ENCODE measurements at regions of chr2 and their contacts with region 1.

Region 1: GRCh38 chr2:148796735-148797512 is 78.1 kb upstream of the KIF5C start:
- DNase-seq: no peak
- H3K4me3 ChIP-seq: no peak overlapping the region
- H3K27ac ChIP-seq: no peak overlapping the region
- H3K4me1 ChIP-seq: no peaks in the 10 kb centered on the region
- H3K27me3 ChIP-seq: no peaks in the 10 kb centered on the region
- CTCF ChIP-seq: no peak
- EP300 ChIP-seq: no peak
- POLR2A ChIP-seq: no peak

Region 2: GRCh38 chr2:148888003-148888501 is 91.1 kb after region 1 on chr2:
- intact Hi-C with region 1: loop called in 1 of 4 experiments (anchors 5 kb)
- DNase-seq: no peak
- H3K4me3 ChIP-seq: peak overlapping the region; percentile 18
- H3K27ac ChIP-seq: no peak overlapping the region
- H3K4me1 ChIP-seq: peaks cover 3% of the 10 kb centered on the region
- H3K27me3 ChIP-seq: no peaks in the 10 kb centered on the region
- CTCF ChIP-seq: no peak
- EP300 ChIP-seq: no peak
- POLR2A ChIP-seq: no peak

Measured in ovary (tissue), 10 donors.